ENCODE measurements at regions of chr6 and their contacts with region 1.

Region 1: GRCh38 chr6:164396071-164397047 is 913.0 kb downstream of the C6orf118 start:
- DNase-seq: no peak
- ATAC-seq: peak in 1 of 2 donors; percentile 40
- H3K4me3 ChIP-seq: peak overlapping the region; percentile 55
- H3K27ac ChIP-seq: peak overlapping the region; percentile 46
- H3K4me1 ChIP-seq: no peaks in the 10 kb centered on the region
- H3K27me3 ChIP-seq: no peaks in the 10 kb centered on the region

Region 2: DNA sequence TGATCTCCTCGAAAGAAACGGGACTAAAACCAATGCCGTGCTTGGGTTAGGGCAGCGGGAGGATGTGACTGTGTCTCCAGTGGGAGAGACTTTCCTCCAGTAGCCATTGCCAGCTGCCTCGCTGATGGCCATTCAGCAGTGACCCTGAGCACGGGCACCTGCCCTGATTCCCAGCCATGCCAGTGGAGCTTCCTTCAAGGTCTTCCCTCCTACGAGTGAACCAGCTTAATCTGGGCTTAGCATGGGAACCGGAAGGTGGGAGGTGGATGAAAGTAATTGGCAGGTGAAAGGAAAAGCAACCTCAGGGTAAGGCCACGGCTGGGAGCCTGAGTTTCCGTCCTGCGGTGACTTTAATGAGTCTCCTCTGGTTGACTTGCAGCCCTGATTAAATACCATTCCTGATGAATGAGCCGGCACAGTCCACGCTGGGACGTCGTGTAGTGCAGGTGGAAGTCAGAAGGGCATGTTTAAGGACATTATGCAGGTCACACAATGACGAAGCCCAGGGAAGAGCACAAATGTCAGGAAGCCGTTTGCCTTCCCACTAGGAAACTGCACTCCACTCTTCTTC is 168.3 kb before region 1 on chr6:
- intact Hi-C with region 1: no loop called
- DNase-seq: no peak
- ATAC-seq: no peak
- H3K4me3 ChIP-seq: no peak overlapping the region
- H3K27ac ChIP-seq: no peak overlapping the region
- H3K4me1 ChIP-seq: no peaks in the 10 kb centered on the region
- H3K27me3 ChIP-seq: no peaks in the 10 kb centered on the region

Region 3: DNA sequence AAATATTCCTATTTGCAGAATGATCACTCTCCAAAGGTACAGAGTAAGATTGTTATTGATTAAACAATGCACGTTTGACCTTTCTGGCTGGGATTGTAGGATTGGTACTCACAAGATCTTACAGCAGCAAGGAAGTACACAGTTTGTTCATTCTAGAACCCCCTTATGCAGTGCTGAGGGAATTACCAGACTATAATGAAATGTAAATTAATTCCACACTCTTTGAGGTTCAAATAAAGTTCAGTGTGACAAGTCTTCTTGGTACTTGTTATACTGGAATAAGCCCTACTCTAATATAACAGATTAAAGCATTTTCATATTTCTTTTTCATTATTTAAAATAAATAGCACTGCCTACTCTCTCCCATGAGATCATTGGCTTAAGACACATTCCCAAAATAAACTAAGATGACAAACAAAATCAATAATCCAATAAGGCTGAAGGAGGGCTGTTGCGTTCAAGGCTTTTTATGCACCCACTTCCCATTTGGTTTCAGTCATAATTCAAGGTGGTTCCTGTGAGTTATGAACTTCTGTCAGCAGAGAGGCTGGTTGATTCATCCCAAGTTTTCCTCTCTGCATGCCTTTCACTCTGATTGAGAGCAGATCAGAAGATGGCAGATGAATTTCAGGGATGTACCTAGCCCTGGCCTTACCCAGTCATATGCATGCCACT is 31.5 kb after region 1 on chr6:
- intact Hi-C with region 1: no loop called
- DNase-seq: no peak
- ATAC-seq: no peak
- H3K4me3 ChIP-seq: no peak overlapping the region
- H3K27ac ChIP-seq: no peak overlapping the region
- H3K4me1 ChIP-seq: no peaks in the 10 kb centered on the region
- H3K27me3 ChIP-seq: no peaks in the 10 kb centered on the region

Region 4: GRCh38 chr6:166025149-166025898 is 1629.0 kb after region 1 on chr6:
- intact Hi-C with region 1: loop called in 1 of 4 experiments (anchors 10 kb)
- DNase-seq: peak in 1 of 3 donors; percentile 50
- ATAC-seq: no peak
- H3K4me3 ChIP-seq: no peak overlapping the region
- H3K27ac ChIP-seq: no peak overlapping the region
- H3K4me1 ChIP-seq: no peaks in the 10 kb centered on the region
- H3K27me3 ChIP-seq: no peaks in the 10 kb centered on the region

Measured in right cardiac atrium (tissue), 5 donors.